Sciatic nerve (tissue), 2 donors: ENCODE measurements at regions of chr15 and their contacts with region 1.

Region 1: GRCh38 chr15:29570931-29571791 is 251.1 kb downstream of the TJP1 start:
- DNase-seq: no peak
- ATAC-seq: no peak

Region 2: GRCh38 chr15:29792426-29793159 is 221.4 kb after region 1 on chr15:
- intact Hi-C with region 1: no loop called
- DNase-seq: no peak
- ATAC-seq: no peak

Region 3: GRCh38 chr15:29832709-29833108 is 261.5 kb after region 1 on chr15:
- intact Hi-C with region 1: loop called (anchors 5 kb)
- DNase-seq: no peak
- ATAC-seq: no peak